Aorta (tissue), 5 donors: ENCODE measurements at regions of chr10 and their contacts with region 1.

Region 1: GRCh38 chr10:118308664-118309063 is 33.5 kb downstream of the FAM204A start:
- DNase-seq: no peak
- ATAC-seq: no peak
- H3K4me3 ChIP-seq: no peak overlapping the region
- H3K27ac ChIP-seq: peak overlapping the region in 1 of 2 donors; percentile 54
- H3K4me1 ChIP-seq: peaks cover 2 to 10% of the 10 kb centered on the region in 2 donors
- H3K27me3 ChIP-seq: no peaks in the 10 kb centered on the region

Region 2: DNA sequence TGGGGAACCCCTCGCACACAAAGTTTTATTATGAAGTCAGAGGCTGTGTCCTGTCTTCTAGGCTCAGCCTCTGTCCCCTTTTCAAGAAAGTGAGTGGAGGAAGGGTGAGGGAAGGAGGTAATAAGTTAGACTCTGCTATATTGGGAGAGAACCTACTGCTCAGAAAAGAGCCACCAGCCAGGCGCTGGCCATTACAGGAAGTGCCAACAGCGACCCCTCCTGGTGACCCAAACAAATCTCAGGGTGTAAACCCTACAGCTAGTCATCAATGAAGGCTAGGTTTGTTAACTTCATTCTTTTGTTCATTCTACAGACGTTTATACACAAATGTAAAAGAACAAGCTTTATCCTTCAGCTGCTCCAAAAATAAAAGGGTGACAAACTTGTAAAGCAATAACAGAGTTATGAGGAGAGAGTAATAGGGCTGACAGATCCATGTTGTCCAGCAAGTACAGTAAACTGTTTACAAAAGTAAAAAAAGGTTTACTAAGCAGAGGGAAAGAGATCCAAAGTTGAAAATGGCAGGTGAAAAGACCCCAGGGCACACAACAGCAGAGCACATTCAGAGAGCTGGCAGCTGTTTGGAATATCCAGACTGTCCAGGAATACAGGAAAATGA is 49.3 kb before region 1 on chr10:
- intact Hi-C with region 1: no loop called
- DNase-seq: no peak
- ATAC-seq: no peak
- H3K4me3 ChIP-seq: no peak overlapping the region
- H3K27ac ChIP-seq: no peak overlapping the region
- H3K4me1 ChIP-seq: no peaks in the 10 kb centered on the region
- H3K27me3 ChIP-seq: peaks cover 0 to 3% of the 10 kb centered on the region in 2 donors

Region 3: GRCh38 chr10:118272149-118272721 is 36.4 kb before region 1 on chr10:
- intact Hi-C with region 1: no loop called
- DNase-seq: peak in 1 of 2 donors; percentile 50
- ATAC-seq: peak; percentile 52
- H3K4me3 ChIP-seq: peak overlapping the region; percentile 41 to 49
- H3K27ac ChIP-seq: no peak overlapping the region
- H3K4me1 ChIP-seq: no peaks in the 10 kb centered on the region
- H3K27me3 ChIP-seq: no peaks in the 10 kb centered on the region

Region 4: GRCh38 chr10:118341791-118342637 is 33.4 kb after region 1 on chr10 and contains the start of gene FAM204A:
- intact Hi-C with region 1: loop called in 1 of 2 experiments (anchors 5 kb)
- DNase-seq: peak; percentile 96 to 97
- ATAC-seq: peak; percentile 100
- H3K4me3 ChIP-seq: peak within 1 kb of the TSS; percentile 94 to 96
- H3K27ac ChIP-seq: peak within 1 kb of the TSS; percentile 45 to 61
- H3K4me1 ChIP-seq: peaks cover 0 to 3% of the 10 kb centered on the region in 2 donors
- H3K27me3 ChIP-seq: no peaks in the 10 kb centered on the region
- total RNA-seq, gene FAM204A: 60.5 to 66.5 TPM

Region 5: DNA sequence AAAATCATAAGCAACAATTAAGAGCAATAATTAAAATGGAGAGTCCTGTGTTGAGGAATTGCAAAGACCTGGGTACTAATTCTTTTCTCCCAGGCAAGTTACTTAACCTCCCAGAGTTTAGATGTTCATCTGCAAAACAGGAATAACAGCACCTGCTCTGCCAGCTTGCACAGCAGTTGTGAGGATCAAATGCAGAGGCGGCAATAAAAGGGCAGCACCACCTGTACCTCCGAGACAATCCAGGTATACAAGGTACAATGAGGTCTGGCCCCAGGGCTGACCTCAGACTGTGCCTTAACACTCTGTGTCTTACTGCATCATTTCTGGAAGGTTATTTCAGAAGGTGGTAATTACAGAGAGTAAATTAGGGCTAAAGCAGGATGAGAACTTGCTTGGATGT is 48.0 kb after region 1 on chr10:
- intact Hi-C with region 1: no loop called
- DNase-seq: no peak
- ATAC-seq: no peak
- H3K4me3 ChIP-seq: no peak overlapping the region
- H3K27ac ChIP-seq: no peak overlapping the region
- H3K4me1 ChIP-seq: no peaks in the 10 kb centered on the region
- H3K27me3 ChIP-seq: no peaks in the 10 kb centered on the region

Region 6: DNA sequence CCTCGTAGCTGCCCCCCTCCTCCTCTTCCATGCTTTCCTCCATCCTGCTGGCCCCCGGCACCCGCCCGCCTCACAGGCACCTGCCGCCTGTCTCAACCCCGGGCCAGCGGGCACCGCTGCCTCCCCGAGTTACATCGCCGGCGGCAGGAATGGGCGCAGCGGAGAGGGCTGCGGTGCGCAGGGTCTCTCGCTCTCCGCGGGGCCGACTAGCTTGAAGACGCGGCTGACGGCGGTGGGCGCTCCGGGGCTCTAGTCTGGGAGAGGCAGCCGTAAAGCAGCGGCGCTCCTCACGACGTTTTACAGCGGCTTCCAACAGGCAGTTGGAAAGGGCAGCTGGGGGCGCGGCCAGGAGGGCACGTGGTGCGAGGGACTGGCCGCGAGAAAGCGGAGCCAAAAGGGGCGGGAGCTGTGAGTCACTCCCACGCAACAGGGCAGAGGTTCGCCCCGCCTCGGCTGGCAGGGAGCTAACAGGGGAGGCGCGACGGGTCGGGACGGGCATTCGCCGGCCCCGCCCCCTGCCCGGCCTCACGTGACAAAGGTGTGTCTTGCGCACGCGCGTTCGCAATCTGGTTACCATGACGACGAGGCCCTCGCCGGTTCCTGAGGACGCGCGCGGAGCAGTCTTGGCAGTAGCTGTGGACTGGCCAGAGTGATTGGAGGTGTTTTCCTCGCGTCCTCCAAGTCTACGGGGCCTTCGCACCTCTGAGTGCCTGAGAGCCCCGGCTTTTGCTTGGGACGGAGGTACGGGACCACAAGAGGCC is 446.2 kb after region 1 on chr10 and contains the start of gene CACUL1:
- intact Hi-C with region 1: no loop called
- DNase-seq: peak; percentile 100
- ATAC-seq: peak; percentile 100
- H3K4me3 ChIP-seq: peak within 1 kb of the TSS; percentile 86 to 88
- H3K27ac ChIP-seq: peak within 1 kb of the TSS in 1 of 2 donors; percentile 55
- H3K4me1 ChIP-seq: no peaks in the 10 kb centered on the region
- H3K27me3 ChIP-seq: no peaks in the 10 kb centered on the region
- total RNA-seq, gene CACUL1: 39.2 to 48.7 TPM